Naive thymus-derived CD4-positive, alpha-beta T cell (primary cell): ENCODE measurements at regions of chr4 and their contacts with region 1.

Region 1: DNA sequence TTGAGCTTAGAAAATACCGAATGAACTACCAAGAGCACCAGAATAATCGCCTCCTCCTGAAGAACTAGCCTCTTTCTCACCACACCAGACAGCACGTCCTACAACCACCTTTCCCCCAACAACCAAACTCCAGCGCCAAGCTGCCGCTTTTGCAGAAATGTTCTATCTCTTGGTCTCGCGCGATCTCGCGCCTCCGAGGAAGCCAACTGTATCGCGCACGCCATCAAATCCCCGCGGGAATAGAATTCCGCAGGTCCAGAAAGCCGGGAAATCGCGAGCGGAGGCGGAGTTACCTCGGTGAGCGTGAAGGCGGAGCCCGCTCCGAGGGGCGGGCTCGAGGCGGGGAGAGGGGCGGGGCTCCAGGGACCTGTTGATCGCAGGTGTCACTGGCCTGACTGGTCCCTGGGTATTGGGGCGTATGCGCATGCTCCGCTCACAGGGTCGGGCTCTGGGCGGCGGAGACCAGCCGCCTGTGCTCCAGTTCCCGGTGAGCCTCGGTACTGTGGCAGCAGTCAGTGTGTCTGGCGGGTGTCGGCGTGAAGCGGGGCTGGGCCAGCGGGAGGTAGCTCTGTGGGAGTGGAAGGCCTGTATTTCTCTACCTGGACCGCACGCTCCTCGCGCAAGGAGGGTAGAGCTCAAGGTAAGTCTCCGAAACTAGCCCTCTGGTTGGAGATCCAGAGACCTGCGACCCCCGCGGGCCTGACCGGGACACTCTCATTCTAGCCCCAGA is at the start of gene USP53:
- DNase-seq: peak; percentile 92 to 98 (median 96)
- ATAC-seq: peak; percentile 96
- H3K4me3 ChIP-seq: peak within 1 kb of the TSS; percentile 91
- H3K4me3 Mint-ChIP-seq: peak within 1 kb of the TSS; percentile 89 to 100 (median 94)
- H3K27ac ChIP-seq: peak within 1 kb of the TSS; percentile 77
- H3K27ac Mint-ChIP-seq: peak within 1 kb of the TSS; percentile 92 to 100 (median 96)
- H3K4me1 ChIP-seq: peaks cover 0 to 10% of the 10 kb centered on the region in 2 donors
- H3K4me1 Mint-ChIP-seq: peaks cover 27 to 65% (median 39%) of the 10 kb centered on the region in 7 donors
- H3K27me3 ChIP-seq: no peaks in the 10 kb centered on the region
- H3K27me3 Mint-ChIP-seq: peaks cover 0 to 4% (median 0%) of the 10 kb centered on the region in 5 donors
- total RNA-seq, gene USP53: 7.3 to 29.8 (median 21.2) TPM

Region 2: DNA sequence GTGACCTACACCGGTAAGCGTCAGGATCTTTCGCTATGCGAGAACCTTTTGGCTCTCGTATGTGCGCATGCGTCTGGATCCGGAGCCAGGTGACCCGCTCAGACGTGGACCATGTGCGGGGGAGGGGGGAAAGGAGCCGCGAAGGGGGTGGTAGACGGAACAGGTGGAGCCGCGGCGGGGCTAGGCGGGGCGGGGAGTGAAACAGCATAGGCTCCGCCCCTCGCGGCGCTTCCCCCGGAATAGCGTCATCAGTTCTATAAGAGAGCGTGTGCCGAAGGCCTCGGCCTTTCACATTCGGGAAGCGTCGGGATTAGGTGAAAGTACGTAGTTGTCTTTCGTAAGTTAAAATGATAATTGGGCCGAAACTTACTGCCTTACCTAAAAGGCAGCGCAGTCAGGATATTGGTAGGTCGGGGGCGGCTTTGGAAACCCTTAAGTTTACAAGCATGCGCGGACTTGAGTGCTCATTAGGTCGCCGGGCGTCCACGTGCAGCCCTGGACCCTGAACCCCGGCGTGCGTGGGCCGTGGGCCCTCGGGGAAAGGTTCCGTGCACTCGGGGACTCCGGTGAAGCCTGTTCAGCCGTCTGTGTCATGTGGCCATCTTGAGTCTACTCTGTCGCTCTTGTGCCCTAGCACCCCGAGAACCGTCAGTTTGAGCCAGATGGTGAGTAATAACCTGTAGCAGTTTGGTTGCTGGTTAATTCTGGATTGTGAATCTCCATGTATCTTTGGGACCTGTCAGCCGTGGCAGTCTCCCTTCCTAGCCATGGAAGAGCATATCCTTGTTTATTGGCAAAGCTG is 933.7 kb before region 1 on chr4:
- CTCF ChIA-PET with region 1: no interaction called
- POLR2A ChIA-PET with region 1: no interaction called
- intact Hi-C with region 1: loop called (anchors 2 kb)
- DNase-seq: peak; percentile 91 to 99 (median 95)
- ATAC-seq: peak; percentile 98
- H3K4me3 ChIP-seq: peak overlapping the region; percentile 80
- H3K4me3 Mint-ChIP-seq: peak overlapping the region; percentile 91 to 98 (median 94)
- H3K27ac ChIP-seq: peak overlapping the region; percentile 94
- H3K27ac Mint-ChIP-seq: peak overlapping the region; percentile 93 to 99 (median 98)
- H3K4me1 ChIP-seq: peaks cover 16 to 20% of the 10 kb centered on the region in 2 donors
- H3K4me1 Mint-ChIP-seq: peaks cover 24 to 58% (median 48%) of the 10 kb centered on the region in 7 donors
- H3K27me3 ChIP-seq: no peaks in the 10 kb centered on the region
- H3K27me3 Mint-ChIP-seq: no peaks in the 10 kb centered on the region

Region 3: DNA sequence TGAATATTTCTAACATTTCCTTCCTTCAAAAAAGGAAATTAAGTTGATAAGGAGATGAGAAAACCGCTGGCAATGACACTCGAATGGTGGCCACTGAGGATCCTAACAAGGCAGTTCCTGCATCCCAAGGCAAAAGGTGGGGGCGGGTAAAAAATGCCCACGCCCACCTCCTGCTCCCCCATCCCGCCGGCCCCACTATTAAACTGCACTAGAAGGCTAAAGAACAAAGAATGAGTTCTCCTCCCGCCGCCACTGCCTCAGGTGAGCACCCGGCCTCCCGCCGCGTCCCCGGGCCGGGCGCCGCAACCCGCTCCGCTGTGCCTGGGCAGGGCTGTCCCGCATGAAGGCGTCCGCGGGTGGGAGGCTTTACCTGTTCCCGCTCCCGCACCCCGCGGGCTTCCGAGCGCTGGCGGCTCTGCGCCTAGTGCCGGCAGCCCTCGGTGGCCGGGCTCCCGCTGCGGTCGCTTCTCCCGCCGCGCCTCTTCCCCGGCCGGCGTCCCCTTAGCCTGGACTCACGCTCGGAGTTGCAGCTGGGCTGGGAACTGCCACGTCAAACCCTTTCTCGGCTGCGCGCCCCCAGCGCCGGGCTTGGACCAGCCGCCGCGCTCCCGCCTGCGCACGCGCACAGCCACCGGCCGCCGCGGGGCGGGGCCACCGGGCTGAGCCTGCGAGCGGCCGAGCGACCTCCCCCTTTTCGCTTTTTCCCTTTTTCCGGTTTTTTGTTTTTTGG is 376.7 kb before region 1 on chr4 and contains the start of gene SEC24D:
- CTCF ChIA-PET with region 1: no interaction called
- POLR2A ChIA-PET with region 1: no interaction called
- intact Hi-C with region 1: loop called (anchors 1 to 2 kb)
- DNase-seq: peak; percentile 71 to 95 (median 80)
- ATAC-seq: peak; percentile 90
- H3K4me3 ChIP-seq: peak within 1 kb of the TSS; percentile 91
- H3K4me3 Mint-ChIP-seq: peak within 1 kb of the TSS; percentile 87 to 100 (median 99)
- H3K27ac ChIP-seq: peak within 1 kb of the TSS; percentile 87
- H3K27ac Mint-ChIP-seq: peak within 1 kb of the TSS; percentile 86 to 100 (median 96)
- H3K4me1 ChIP-seq: peaks cover 0 to 5% of the 10 kb centered on the region in 2 donors
- H3K4me1 Mint-ChIP-seq: peaks cover 15 to 31% (median 20%) of the 10 kb centered on the region in 7 donors
- H3K27me3 ChIP-seq: no peaks in the 10 kb centered on the region
- H3K27me3 Mint-ChIP-seq: peaks cover 0 to 4% (median 0%) of the 10 kb centered on the region in 5 donors
- total RNA-seq, gene SEC24D: 11.5 to 59.2 (median 16.4) TPM

Region 4: GRCh38 chr4:118968005-118968404 is 244.4 kb before region 1 on chr4:
- CTCF ChIA-PET with region 1: no interaction called
- POLR2A ChIA-PET with region 1: no interaction called
- intact Hi-C with region 1: no loop called
- DNase-seq: peak in 1 of 9 donors; percentile 1
- ATAC-seq: peak; percentile 84
- H3K4me3 ChIP-seq: no peak overlapping the region
- H3K4me3 Mint-ChIP-seq: peak overlapping the region in 2 of 10 donors; percentile 2 to 9
- H3K27ac ChIP-seq: no peak overlapping the region
- H3K27ac Mint-ChIP-seq: peak overlapping the region in 2 of 9 donors; percentile 9 to 64
- H3K4me1 ChIP-seq: no peaks in the 10 kb centered on the region
- H3K4me1 Mint-ChIP-seq: peaks cover 6 to 12% (median 9%) of the 10 kb centered on the region in 7 donors
- H3K27me3 ChIP-seq: no peaks in the 10 kb centered on the region
- H3K27me3 Mint-ChIP-seq: peaks cover 0 to 8% (median 0%) of the 10 kb centered on the region in 5 donors

Region 5: DNA sequence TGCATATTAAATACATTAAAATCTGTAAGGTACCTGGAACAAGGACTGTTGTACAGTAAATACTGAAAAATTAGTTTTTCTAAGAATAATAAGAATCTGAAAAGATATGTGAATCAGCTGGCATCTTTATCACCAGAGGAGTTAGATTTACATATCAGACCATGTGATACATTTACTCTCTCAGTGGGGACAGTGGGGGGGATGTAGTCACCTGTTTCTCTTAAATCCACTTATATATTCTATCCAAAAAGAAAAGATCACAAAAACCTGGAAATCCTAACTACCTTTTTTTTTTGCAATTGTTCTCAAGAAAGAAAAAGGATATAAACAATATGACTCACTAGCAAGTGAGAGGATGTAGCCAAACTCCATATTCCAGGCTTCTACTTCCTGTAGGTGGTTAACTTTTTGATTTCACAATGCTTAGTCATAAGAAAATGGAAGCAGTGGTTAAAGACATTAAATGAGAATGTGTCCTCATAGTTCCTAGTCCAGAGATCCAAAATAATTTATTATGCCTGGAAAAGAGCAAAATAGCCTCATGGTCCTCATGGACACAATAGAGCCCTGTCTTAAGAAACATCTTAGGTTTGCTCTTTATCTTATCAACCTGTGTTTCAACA is 99.3 kb before region 1 on chr4:
- CTCF ChIA-PET with region 1: no interaction called
- POLR2A ChIA-PET with region 1: interaction called, 3 read pairs
- intact Hi-C with region 1: loop called in 1 of 2 experiments (anchors 2 kb)
- DNase-seq: no peak
- ATAC-seq: peak; percentile 73
- H3K4me3 ChIP-seq: no peak overlapping the region
- H3K4me3 Mint-ChIP-seq: no peak overlapping the region
- H3K27ac ChIP-seq: no peak overlapping the region
- H3K27ac Mint-ChIP-seq: no peak overlapping the region
- H3K4me1 ChIP-seq: no peaks in the 10 kb centered on the region
- H3K4me1 Mint-ChIP-seq: peaks cover 0 to 10% (median 4%) of the 10 kb centered on the region in 7 donors
- H3K27me3 ChIP-seq: no peaks in the 10 kb centered on the region
- H3K27me3 Mint-ChIP-seq: peaks cover 0 to 9% (median 6%) of the 10 kb centered on the region in 5 donors

Region 6: DNA sequence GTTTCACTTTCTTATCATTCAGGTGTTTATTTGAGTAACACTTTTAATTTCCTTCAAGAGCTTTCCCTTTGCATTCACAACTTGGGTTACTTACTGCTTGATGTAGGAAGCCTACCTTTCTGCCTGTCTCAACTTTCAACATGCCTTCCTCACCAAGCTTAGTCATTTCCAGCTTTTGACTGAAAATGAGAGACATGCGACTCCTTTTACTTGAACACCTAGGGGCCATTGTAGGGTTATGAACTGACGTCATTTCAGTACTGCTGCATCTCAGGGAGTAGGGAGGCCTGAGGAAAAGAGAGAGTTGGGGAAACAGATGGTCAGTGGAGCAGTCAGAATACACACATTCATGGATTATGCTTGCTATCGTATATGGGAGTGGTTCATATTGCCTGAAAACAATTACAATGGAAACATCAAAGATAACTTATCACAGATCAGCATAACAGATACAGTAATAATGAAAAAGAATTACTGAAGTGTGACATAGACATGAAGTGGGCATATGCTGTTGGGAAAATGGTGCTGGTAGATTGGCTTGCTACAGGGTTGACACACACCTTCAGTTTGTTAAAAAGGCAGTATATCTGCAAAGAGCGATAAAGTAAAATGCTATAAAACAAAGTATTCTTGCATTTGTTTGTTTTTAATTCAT is 25.8 kb after region 1 on chr4:
- CTCF ChIA-PET with region 1: no interaction called
- POLR2A ChIA-PET with region 1: interaction called, 6 read pairs
- intact Hi-C with region 1: loop called (anchors 1 kb)
- DNase-seq: peak in 1 of 9 donors; percentile 24
- ATAC-seq: no peak
- H3K4me3 ChIP-seq: no peak overlapping the region
- H3K4me3 Mint-ChIP-seq: peak overlapping the region in 3 of 10 donors; percentile 24 to 37 (median 27)
- H3K27ac ChIP-seq: no peak overlapping the region
- H3K27ac Mint-ChIP-seq: peak overlapping the region in 4 of 9 donors; percentile 53 to 67 (median 61)
- H3K4me1 ChIP-seq: peaks cover 0 to 9% of the 10 kb centered on the region in 2 donors
- H3K4me1 Mint-ChIP-seq: peaks cover 17 to 60% (median 35%) of the 10 kb centered on the region in 7 donors
- H3K27me3 ChIP-seq: no peaks in the 10 kb centered on the region
- H3K27me3 Mint-ChIP-seq: no peaks in the 10 kb centered on the region

Region 7: GRCh38 chr4:119628308-119629141 is 416.1 kb after region 1 on chr4 and contains the start of gene PDE5A:
- CTCF ChIA-PET with region 1: no interaction called
- POLR2A ChIA-PET with region 1: interaction called, 4 read pairs
- intact Hi-C with region 1: loop called (anchors 2 to 5 kb)
- DNase-seq: peak; percentile 51 to 81 (median 71)
- ATAC-seq: peak; percentile 88
- H3K4me3 ChIP-seq: peak within 1 kb of the TSS; percentile 70
- H3K4me3 Mint-ChIP-seq: peak within 1 kb of the TSS; percentile 91 to 97 (median 94)
- H3K27ac ChIP-seq: peak within 1 kb of the TSS; percentile 45
- H3K27ac Mint-ChIP-seq: peak within 1 kb of the TSS; percentile 4 to 94 (median 71)
- H3K4me1 ChIP-seq: peaks cover 6 to 7% of the 10 kb centered on the region in 2 donors
- H3K4me1 Mint-ChIP-seq: peaks cover 7 to 27% (median 23%) of the 10 kb centered on the region in 7 donors
- H3K27me3 ChIP-seq: no peaks in the 10 kb centered on the region
- H3K27me3 Mint-ChIP-seq: peaks cover 5 to 73% (median 11%) of the 10 kb centered on the region in 5 donors
- total RNA-seq, gene PDE5A: 0.21 to 1.5 (median 0.65) TPM

Region 8: GRCh38 chr4:119861731-119862130 is 649.3 kb after region 1 on chr4:
- CTCF ChIA-PET with region 1: no interaction called
- POLR2A ChIA-PET with region 1: no interaction called
- intact Hi-C with region 1: no loop called
- DNase-seq: no peak
- ATAC-seq: no peak
- H3K4me3 ChIP-seq: no peak overlapping the region
- H3K4me3 Mint-ChIP-seq: no peak overlapping the region
- H3K27ac ChIP-seq: no peak overlapping the region
- H3K27ac Mint-ChIP-seq: no peak overlapping the region
- H3K4me1 ChIP-seq: no peaks in the 10 kb centered on the region
- H3K4me1 Mint-ChIP-seq: no peaks in the 10 kb centered on the region
- H3K27me3 ChIP-seq: no peaks in the 10 kb centered on the region
- H3K27me3 Mint-ChIP-seq: peaks cover 0 to 11% (median 0%) of the 10 kb centered on the region in 5 donors